ENCODE measurements at regions of chr5 and their contacts with region 1.

Region 1: GRCh38 chr5:154683101-154683880 is 71.9 kb upstream of the LARP1 start:
- DNase-seq: no peak
- H3K4me3 ChIP-seq: peak overlapping the region in 1 of 3 experiments; percentile 53
- H3K27ac ChIP-seq: no peak overlapping the region
- H3K4me1 ChIP-seq: peaks cover 8% of the 10 kb centered on the region
- H3K27me3 ChIP-seq: no peaks in the 10 kb centered on the region
- CTCF ChIP-seq: no peak
- POLR2A ChIP-seq: no peak

Region 2: GRCh38 chr5:154421868-154422267 is 261.4 kb before region 1 on chr5:
- CTCF ChIA-PET with region 1: no interaction called
- POLR2A ChIA-PET with region 1: no interaction called
- dilution Hi-C with region 1: no loop called
- intact Hi-C with region 1: no loop called
- DNase-seq: peak; percentile 33
- H3K4me3 ChIP-seq: no peak overlapping the region
- H3K27ac ChIP-seq: no peak overlapping the region
- H3K4me1 ChIP-seq: no peaks in the 10 kb centered on the region
- H3K27me3 ChIP-seq: no peaks in the 10 kb centered on the region
- CTCF ChIP-seq: peak; percentile 56 to 62
- POLR2A ChIP-seq: no peak

Region 3: GRCh38 chr5:154654486-154655371 is 28.6 kb before region 1 on chr5:
- CTCF ChIA-PET with region 1: interaction called, 8 read pairs
- POLR2A ChIA-PET with region 1: no interaction called
- dilution Hi-C with region 1: no loop called
- intact Hi-C with region 1: loop called (anchors 1 kb)
- DNase-seq: peak; percentile 79
- H3K4me3 ChIP-seq: peak overlapping the region in 1 of 3 experiments; percentile 50
- H3K27ac ChIP-seq: peak overlapping the region; percentile 86
- H3K4me1 ChIP-seq: peaks cover 22% of the 10 kb centered on the region
- H3K27me3 ChIP-seq: no peaks in the 10 kb centered on the region
- CTCF ChIP-seq: no peak
- POLR2A ChIP-seq: peak; percentile 57

Region 4: DNA sequence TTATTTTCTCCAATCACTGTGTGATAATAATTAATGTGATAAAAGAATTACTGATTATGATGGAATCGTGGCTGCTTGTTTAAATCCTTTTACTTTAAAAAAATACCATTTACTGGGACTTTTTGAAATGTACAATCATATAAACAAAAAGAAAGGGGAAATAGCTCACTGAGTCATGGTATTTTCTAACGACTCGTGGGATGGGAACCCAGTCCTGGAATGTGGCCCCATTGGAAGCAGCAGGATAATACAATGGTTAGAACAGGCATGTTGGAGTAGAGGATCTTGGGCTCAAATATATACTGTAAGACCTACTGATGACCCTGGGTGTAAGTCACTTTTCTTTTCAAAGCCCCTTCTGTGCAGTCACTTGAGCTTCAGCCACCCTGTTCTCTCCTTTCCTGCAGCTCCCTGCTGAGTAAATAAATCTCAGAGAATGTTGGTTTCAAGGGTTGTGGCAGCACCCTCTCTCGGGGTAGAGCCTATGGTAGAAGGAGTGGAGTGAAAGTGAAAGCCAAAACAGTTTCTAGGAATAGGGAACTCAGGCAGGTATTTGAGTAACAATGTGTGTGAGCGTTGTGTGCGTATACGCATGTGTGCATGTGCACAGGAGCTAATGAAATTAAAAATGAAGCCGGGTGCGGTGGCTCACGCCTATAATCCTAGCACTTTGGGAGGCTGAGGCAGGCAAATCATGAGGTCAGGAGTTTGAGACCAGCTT is 31.1 kb after region 1 on chr5:
- CTCF ChIA-PET with region 1: no interaction called
- POLR2A ChIA-PET with region 1: no interaction called
- dilution Hi-C with region 1: no loop called
- intact Hi-C with region 1: loop called (anchors 1 kb)
- DNase-seq: peak; percentile 64
- H3K4me3 ChIP-seq: no peak overlapping the region
- H3K27ac ChIP-seq: peak overlapping the region; percentile 25
- H3K4me1 ChIP-seq: peaks cover 11% of the 10 kb centered on the region
- H3K27me3 ChIP-seq: no peaks in the 10 kb centered on the region
- CTCF ChIP-seq: no peak
- POLR2A ChIP-seq: no peak

Region 5: DNA sequence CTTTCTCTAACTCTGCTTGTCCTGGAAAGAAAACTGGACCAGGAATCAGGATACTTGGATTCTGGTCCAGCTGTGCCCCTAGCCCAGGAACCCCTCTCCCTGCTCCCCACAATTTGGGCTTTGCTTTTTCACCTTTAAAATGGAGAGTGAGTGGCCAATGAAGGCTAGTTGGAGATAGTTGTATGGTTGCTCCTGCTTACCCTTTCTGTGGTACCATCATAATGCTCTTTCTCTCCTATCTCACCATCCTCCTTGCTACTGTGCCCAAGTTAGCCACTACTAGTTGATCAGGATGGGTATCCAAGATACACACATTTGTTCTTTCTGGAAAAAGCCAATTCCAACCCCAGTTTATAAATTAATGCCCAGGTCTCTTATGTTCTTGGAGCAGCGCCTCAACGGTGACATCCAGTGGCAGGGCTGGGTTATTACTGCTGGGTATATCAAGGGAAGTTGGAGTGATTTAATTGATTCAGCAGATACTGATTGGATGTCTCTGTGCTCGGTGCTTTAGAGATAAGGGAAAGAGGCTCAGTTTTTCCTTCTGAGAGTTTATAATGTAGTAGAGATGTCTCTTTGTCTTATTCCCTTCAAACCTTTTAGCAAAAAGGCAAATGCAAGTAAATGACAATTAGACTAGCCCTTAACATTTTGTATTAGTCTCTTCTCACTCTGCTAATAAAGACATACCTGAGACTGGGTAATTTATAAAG is 128.5 kb after region 1 on chr5:
- CTCF ChIA-PET with region 1: no interaction called
- POLR2A ChIA-PET with region 1: no interaction called
- dilution Hi-C with region 1: no loop called
- intact Hi-C with region 1: loop called (anchors 1 kb)
- DNase-seq: peak; percentile 77
- H3K4me3 ChIP-seq: no peak overlapping the region
- H3K27ac ChIP-seq: no peak overlapping the region
- H3K4me1 ChIP-seq: no peaks in the 10 kb centered on the region
- H3K27me3 ChIP-seq: no peaks in the 10 kb centered on the region
- CTCF ChIP-seq: peak; percentile 70 to 86
- POLR2A ChIP-seq: no peak

Measured in endothelial cell of umbilical vein (primary cell).